ENCODE measurements at regions of chr11 and their contacts with region 1.

Region 1: GRCh38 chr11:1921574-1922141 is 2.2 kb downstream of the TNNT3 start:
- DNase-seq: no peak
- H3K4me3 ChIP-seq: peak overlapping the region; percentile 59
- H3K27ac ChIP-seq: peak overlapping the region; percentile 92
- H3K4me1 ChIP-seq: peaks cover 97% of the 10 kb centered on the region
- H3K27me3 ChIP-seq: no peaks in the 10 kb centered on the region
- CTCF ChIP-seq: no peak

Region 2: DNA sequence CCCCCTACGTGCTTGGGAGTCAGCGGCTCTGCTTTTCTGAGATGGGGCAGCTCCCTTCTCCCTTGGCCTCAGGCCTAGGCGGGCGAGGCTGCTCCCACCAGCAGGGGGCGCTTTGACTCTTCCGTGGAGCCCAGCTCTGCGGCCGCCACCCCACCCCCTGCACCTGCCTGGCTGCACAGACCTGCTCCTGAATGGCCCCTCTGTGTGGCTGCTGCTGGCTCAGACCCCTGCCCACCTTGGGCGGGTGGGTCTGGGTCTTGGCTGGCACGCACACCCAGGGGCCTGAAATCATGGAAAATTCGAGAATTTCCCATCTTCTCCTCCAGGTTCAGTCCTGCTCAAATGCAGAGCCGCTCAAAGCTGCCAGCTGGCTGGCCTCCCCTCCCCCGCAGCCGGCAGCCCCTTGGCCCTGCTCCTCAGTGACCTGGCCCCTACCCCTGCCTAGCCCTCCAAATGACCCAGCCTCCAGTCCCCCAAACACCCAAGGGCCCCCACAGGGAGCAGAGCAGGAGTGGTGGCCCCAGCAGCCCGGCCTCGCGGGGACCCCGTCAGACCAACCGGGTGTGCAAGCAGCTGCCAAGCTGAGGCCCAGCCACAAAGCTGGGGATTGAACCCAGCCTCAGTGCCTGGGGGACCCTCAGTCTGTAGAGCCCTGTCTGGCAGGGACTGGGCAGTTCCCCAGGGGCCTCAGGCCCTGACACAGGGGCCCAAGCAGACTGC is 39.0 kb before region 1 on chr11:
- intact Hi-C with region 1: loop called (anchors 5 kb)
- DNase-seq: peak; percentile 88
- H3K4me3 ChIP-seq: peak overlapping the region; percentile 45
- H3K27ac ChIP-seq: peak overlapping the region; percentile 97
- H3K4me1 ChIP-seq: peaks cover 55% of the 10 kb centered on the region
- H3K27me3 ChIP-seq: no peaks in the 10 kb centered on the region
- CTCF ChIP-seq: peak; percentile 96

Measured in left ventricle myocardium inferior (tissue), 1 donor.